OCI-LY7 (cell line): ENCODE measurements at regions of chr11 and their contacts with region 1.

Region 1: GRCh38 chr11:63945477-63946163 is 6.8 kb downstream of the NAA40 start:
- DNase-seq: peak; percentile 62
- H3K4me3 ChIP-seq: no peak overlapping the region
- H3K27ac ChIP-seq: no peak overlapping the region
- H3K4me1 ChIP-seq: peaks cover 6% of the 10 kb centered on the region
- CTCF ChIP-seq: peak; percentile 83

Region 2: GRCh38 chr11:63906585-63906984 is 39.0 kb before region 1 on chr11:
- CTCF ChIA-PET with region 1: no interaction called
- POLR2A ChIA-PET with region 1: no interaction called
- intact Hi-C with region 1: loop called (anchors 5 kb)
- DNase-seq: peak; percentile 47
- H3K4me3 ChIP-seq: no peak overlapping the region
- H3K27ac ChIP-seq: no peak overlapping the region
- H3K4me1 ChIP-seq: no peaks in the 10 kb centered on the region
- CTCF ChIP-seq: peak; percentile 63